Mammary epithelial cell (primary cell): ENCODE measurements at regions of chr2 and their contacts with region 1.

Region 1: DNA sequence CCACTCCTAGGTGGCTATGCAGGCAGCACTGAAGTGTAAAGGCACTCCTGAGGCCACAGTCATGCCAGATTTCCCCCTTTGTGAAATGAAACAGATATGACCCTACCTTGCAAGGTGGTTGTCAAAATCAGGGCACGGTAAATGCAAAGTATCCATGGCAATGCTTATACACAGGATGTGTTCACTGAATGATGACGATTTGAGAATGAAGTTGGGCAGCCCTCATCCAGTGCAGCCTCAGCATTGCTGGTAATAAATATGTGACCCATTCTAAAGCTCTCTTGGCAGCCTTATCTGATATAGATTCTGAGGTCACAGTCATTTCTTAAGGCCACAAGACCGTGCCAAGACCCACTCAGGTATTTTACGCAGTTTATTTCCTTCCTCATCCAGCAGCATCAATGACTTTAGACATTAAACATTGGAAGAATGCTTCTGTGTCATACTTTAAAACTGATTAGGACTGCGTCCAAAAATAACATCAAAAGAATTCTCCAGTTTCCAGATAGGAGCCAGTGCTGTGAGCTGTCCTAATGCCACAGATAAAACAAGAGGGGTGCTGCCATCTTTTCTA is 125.5 kb upstream of the SERTAD2 start:
- DNase-seq: peak; percentile 66
- H3K4me3 ChIP-seq: no peak overlapping the region
- H3K27ac ChIP-seq: no peak overlapping the region
- H3K4me1 ChIP-seq: peaks cover 12% of the 10 kb centered on the region
- H3K27me3 ChIP-seq: no peaks in the 10 kb centered on the region
- CTCF ChIP-seq: no peak

Region 2: DNA sequence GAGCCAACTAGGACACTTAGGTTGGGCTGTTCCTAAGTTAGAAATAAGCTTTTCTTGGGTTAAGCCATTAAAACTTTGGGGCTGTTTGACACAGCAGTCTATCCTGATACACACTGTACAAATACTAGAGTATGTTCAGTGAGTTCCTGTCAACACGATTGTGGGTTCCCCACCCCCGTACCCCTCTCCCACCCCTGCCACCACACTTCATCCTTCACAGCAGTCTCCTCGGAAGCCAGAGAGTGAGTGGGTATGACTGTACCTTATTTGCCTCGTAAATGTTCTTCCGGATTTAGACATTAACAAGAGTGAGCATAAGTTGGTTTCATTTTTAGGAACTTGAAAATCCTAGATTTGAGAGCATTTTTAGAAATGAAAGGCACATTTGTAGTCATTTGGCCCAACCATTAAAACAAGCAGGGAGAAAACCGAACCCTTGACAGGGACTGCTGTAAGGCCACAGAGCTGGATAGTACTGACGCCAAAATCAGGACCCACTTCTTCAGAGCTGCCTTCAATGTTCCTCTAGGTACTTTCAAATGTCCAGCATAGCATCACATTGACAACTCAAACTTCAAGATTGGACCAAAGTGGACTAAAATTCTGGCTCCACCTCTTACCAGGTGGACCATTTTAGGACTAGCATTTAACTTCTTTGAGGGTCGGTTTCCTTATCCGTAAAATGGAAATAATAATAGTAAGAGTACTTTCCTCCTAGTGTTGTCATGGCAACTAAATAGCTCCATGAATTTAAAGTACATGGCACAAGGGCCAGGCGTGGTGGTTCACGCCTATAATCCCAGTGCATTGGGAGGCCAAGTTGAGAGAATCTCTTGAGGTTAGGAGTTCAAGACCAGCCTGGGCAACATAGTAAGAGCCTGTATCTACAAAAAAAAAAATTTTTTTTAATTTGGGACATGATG is 40.8 kb after region 1 on chr2:
- CTCF ChIA-PET with region 1: no interaction called
- dilution Hi-C with region 1: loop called (anchors 5 kb)
- in situ Hi-C with region 1: no loop called
- intact Hi-C with region 1: no loop called
- DNase-seq: no peak
- H3K4me3 ChIP-seq: no peak overlapping the region
- H3K27ac ChIP-seq: no peak overlapping the region
- H3K4me1 ChIP-seq: no peaks in the 10 kb centered on the region
- H3K27me3 ChIP-seq: no peaks in the 10 kb centered on the region
- CTCF ChIP-seq: no peak

Region 3: GRCh38 chr2:65116645-65117044 is 337.4 kb after region 1 on chr2:
- CTCF ChIA-PET with region 1: no interaction called
- dilution Hi-C with region 1: no loop called
- in situ Hi-C with region 1: no loop called
- intact Hi-C with region 1: no loop called
- DNase-seq: no peak
- H3K4me3 ChIP-seq: no peak overlapping the region
- H3K27ac ChIP-seq: no peak overlapping the region
- H3K4me1 ChIP-seq: no peaks in the 10 kb centered on the region
- H3K27me3 ChIP-seq: no peaks in the 10 kb centered on the region
- CTCF ChIP-seq: no peak